Dorsolateral prefrontal cortex (tissue), 120 donors: ENCODE measurements at regions of chr17 and their contacts with region 1.

Region 1: DNA sequence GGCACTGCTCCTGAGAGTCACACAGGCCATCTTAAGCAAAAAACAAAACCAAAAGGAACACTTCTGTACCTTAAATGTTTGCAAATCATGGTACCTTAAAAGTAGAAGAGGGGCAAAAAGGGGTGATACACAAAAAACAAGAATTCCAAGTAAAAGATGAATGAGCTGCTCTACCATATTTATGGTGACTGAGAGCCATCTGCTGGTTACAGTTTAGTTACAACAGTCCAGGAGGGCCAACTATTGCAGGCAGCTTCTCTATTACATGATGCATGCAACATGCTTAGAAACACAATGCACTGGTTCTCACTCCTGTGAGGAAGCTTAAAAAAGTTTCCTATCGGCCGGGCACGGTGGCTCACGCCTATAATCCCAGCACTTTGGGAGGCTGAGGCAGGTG is 53.5 kb downstream of the STX8 start:
- DNase-seq: peak in 2 of 10 donors; percentile 25 to 32
- H3K4me3 ChIP-seq: no peak overlapping the region
- H3K27ac ChIP-seq: no peak overlapping the region
- H3K27me3 ChIP-seq: no peaks in the 10 kb centered on the region
- CTCF ChIP-seq: peak; percentile 10 to 90 (median 70)

Region 2: DNA sequence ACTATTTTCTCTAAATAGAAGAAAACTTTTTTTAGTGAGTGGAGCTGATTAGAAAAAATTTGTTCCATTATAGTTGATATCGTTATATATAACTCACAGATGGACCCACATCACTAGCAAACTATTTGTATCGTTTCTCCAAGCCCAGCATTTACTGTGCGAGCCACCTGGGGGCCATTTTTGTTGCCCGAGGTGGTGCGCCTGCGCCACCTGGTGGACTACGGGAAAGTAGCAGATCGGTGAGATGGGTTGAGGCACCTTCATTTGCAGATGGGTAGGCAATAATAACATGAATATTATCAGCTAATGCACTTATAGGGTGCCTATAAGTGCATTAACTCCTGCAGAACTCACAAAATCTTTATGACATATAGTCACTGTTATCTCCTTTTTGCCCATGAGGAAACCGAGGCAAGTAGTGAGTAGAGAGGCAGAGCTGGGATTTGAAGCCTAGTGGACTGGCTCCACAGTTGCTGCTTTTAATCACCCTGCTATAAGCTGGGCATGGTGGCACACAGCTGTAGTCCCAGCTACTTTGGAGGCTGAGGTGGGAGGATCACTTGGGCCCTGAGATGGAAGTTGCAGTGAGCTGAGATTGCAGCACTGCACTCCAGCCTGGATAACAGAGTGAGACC is 524.0 kb before region 1 on chr17:
- intact Hi-C with region 1: loop called (anchors 5 kb)
- DNase-seq: peak in 1 of 10 donors; percentile 27
- H3K4me3 ChIP-seq: no peak overlapping the region
- H3K27ac ChIP-seq: no peak overlapping the region
- H3K27me3 ChIP-seq: peaks cover 0 to 37% (median 6%) of the 10 kb centered on the region in 45 donors
- CTCF ChIP-seq: peak; percentile 31 to 80 (median 69)

Region 3: GRCh38 chr17:9115446-9116191 is 406.5 kb before region 1 on chr17:
- intact Hi-C with region 1: loop called in 1 of 2 experiments (anchors 10 kb)
- DNase-seq: peak in 4 of 10 donors; percentile 20 to 54 (median 28)
- H3K4me3 ChIP-seq: peak overlapping the region in 58 of 59 donors; percentile 2 to 71 (median 44)
- H3K27ac ChIP-seq: peak overlapping the region in 23 of 59 donors; percentile 2 to 78 (median 49)
- H3K27me3 ChIP-seq: peaks cover 0 to 46% (median 0%) of the 10 kb centered on the region in 45 donors
- CTCF ChIP-seq: peak in 47 of 56 donors; percentile 9 to 68 (median 40)

Region 4: GRCh38 chr17:9291912-9292560 is 230.0 kb before region 1 on chr17:
- intact Hi-C with region 1: loop called in 1 of 2 experiments (anchors 10 kb)
- DNase-seq: peak in 6 of 10 donors; percentile 14 to 58 (median 37)
- H3K4me3 ChIP-seq: no peak overlapping the region
- H3K27ac ChIP-seq: peak overlapping the region in 21 of 59 donors; percentile 6 to 65 (median 36)
- H3K27me3 ChIP-seq: no peaks in the 10 kb centered on the region
- CTCF ChIP-seq: peak in 55 of 56 donors; percentile 37 to 79 (median 69)

Region 5: GRCh38 chr17:9549215-9549614 is 27.1 kb after region 1 on chr17:
- intact Hi-C with region 1: no loop called
- DNase-seq: no peak
- H3K4me3 ChIP-seq: no peak overlapping the region
- H3K27ac ChIP-seq: no peak overlapping the region
- H3K27me3 ChIP-seq: no peaks in the 10 kb centered on the region
- CTCF ChIP-seq: no peak